Activated T-helper 2 cell treated with anti-CD3 and anti-CD28 coated beads, Interferon-gamma antibody, Interleukin-2, Interleukin-4, amounts not matched to agents 10 μg/mL and 5 μg/mL and 100 μg/mL, durations not matched to agents 14 hours and 24 hours and 36 hours (primary cell): ENCODE measurements at regions of chr19 and their contacts with region 1.

Region 1: DNA sequence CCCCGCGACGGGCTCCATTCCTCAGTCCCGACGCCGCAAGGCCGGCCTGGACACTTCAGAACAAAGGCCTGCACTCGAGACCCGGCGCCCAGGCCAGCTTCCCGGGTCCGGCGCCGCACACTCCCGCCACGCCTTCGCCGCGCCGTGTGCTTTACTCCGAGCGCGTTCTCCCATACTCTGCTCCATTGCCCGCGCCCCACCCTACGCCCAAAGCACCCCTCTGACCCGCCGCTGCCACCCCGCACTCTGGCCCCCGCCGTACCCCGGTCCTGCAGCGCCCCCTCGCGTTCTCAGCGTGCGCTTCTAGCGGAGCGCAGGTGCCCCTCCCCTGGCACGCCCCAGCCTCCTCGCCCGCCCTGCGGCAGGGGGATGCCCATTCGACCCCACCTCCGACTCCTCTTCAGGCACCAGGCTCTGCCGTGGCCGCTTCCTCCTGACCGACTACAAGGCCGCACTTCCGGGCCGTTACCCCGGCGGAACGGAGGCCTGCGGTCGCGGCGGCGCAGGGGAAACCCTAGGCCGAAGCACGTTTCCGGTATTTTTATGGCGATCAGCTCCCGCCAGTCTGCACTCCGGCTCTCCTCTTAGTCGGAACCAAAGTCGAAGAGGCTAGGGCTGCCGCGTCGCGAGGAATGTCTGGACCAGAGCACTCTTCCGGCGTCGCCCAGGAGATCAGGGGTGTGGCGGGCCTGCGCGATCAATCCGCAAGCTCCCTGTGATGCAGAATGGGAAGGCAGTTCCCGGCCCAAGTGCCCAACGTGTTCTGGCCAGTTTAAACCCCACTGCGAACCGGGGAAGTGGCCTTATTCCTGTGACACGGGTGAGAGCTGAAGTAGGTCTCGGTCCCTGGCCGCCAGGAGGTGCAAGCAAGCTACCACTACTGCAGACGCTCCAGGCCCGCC is at the start of gene ZBTB45:
- DNase-seq: peak; percentile 90
- H3K4me3 Mint-ChIP-seq: peak within 1 kb of the TSS; percentile 99
- H3K27ac Mint-ChIP-seq: peak within 1 kb of the TSS; percentile 98
- H3K4me1 Mint-ChIP-seq: peaks cover 29% of the 10 kb centered on the region
- H3K27me3 Mint-ChIP-seq: no peaks in the 10 kb centered on the region
- total RNA-seq, gene ZBTB45: 16.6 and 17.7 TPM in 2 replicates

Region 2: DNA sequence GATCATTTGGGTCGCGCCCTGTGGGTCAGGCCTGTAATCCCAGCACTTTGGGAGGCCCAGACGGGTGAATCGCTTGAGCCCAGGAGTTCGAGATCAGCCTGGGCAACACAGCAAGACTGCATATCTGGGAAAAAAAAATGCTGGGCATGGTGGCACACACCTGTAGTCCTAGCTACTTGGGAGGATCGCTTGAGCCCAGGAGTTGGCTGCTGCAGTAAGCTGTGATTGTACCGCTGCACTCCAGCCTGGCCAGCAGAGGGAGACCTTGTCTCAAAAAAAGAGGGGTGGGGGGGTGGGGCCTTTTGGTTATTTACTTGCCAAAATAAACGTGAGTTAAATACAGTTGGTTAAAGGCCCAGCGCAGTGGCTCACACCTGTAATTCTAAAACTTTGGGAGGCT is 300.7 kb before region 1 on chr19:
- intact Hi-C with region 1: loop called (anchors 1 kb)
- DNase-seq: peak; percentile 15
- H3K4me3 Mint-ChIP-seq: no peak overlapping the region
- H3K27ac Mint-ChIP-seq: no peak overlapping the region
- H3K4me1 Mint-ChIP-seq: no peaks in the 10 kb centered on the region
- H3K27me3 Mint-ChIP-seq: no peaks in the 10 kb centered on the region

Region 3: GRCh38 chr19:58243351-58243750 is 276.3 kb before region 1 on chr19:
- intact Hi-C with region 1: no loop called
- DNase-seq: no peak
- H3K4me3 Mint-ChIP-seq: no peak overlapping the region
- H3K27ac Mint-ChIP-seq: no peak overlapping the region
- H3K4me1 Mint-ChIP-seq: no peaks in the 10 kb centered on the region
- H3K27me3 Mint-ChIP-seq: no peaks in the 10 kb centered on the region

Region 4: DNA sequence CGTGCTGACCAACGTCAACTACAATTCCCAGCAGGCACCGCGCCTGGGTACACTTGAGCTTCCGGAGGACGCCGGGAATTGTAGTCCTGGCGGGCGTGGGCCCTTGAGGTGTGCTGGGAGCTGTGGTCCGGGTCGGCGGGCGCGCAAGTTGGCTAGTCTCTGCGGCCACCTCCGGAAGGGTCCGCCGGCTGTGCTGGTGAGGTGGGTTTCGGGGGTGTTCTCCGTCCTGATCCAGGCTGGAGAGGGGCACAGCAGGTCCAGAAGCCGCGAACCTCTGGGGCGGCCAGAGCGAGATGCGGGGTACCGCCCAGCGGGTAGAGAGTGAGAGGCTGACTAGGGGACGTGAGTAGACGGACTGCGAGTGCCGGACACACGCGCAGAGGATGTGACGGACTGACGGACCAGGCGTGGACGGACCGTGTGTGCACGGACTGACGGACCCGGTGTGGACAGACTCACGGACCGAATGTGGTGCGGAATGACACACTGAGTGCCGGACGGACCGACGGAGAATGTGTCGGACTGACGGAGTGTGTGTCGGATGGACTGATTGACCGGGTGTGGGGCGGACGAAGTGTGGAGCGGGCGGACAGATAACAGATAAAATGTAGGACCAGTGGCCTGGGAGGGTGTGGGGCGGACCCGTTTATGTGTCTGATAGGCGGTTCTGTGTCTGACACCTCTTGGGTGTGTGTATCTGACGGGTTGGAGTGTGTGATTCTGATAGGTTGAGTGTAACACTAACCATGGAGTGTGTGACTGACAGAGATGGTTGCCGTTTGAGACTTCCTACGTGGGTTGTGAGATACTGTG is 192.5 kb before region 1 on chr19 and contains the start of gene ZSCAN22:
- intact Hi-C with region 1: no loop called
- DNase-seq: peak; percentile 86
- H3K4me3 Mint-ChIP-seq: no peak within 1 kb of the TSS
- H3K27ac Mint-ChIP-seq: no peak within 1 kb of the TSS
- H3K4me1 Mint-ChIP-seq: peaks cover 2% of the 10 kb centered on the region
- H3K27me3 Mint-ChIP-seq: no peaks in the 10 kb centered on the region
- total RNA-seq, gene ZSCAN22: 4.6 and 4.9 TPM in 2 replicates

Region 5: GRCh38 chr19:58429745-58430144 is 89.9 kb before region 1 on chr19:
- intact Hi-C with region 1: no loop called
- DNase-seq: no peak
- H3K4me3 Mint-ChIP-seq: no peak overlapping the region
- H3K27ac Mint-ChIP-seq: no peak overlapping the region
- H3K4me1 Mint-ChIP-seq: no peaks in the 10 kb centered on the region
- H3K27me3 Mint-ChIP-seq: no peaks in the 10 kb centered on the region

Region 6: DNA sequence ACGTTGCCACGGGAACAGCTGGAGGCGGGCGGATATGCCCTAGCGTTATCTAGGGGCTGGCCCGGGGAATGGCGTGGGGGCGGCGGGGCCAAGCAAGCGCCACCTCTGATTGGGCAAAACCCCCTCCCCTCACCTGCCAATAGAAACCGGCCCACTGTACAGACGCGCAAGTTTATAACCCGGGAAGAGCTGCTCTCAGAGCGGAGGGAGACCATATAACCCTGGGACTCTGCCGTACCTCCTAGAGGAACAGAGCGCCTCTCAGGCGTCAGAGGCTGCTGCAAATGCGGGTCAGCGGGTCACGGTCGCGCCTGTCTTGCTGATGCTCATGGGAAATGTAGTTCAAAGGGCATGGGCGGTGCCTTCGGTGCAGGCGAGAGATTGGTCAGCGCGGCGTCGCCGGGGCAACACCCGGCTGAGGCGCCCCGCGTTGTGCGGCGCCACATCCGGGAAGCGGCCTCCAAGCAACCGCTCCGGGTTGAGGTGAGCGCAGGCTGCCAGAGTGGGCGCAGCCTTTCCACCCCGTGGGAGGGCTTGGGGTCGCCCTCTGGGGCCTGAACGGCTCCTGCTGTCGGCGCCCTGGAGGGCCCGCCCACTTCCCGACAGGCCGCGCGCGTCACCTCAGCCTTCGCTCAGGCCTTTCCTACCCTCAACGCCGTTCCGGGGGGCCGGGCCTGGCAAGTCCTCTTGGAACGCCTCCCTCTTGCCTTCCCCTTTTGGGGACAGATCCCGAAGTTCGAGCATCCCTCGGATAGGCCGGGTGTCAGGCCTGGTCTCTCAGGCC is 43.7 kb before region 1 on chr19 and contains the start of gene ZNF446:
- intact Hi-C with region 1: loop called (anchors 1 kb)
- DNase-seq: peak; percentile 97
- H3K4me3 Mint-ChIP-seq: peak within 1 kb of the TSS; percentile 88
- H3K27ac Mint-ChIP-seq: peak within 1 kb of the TSS; percentile 99
- H3K4me1 Mint-ChIP-seq: peaks cover 18% of the 10 kb centered on the region
- H3K27me3 Mint-ChIP-seq: no peaks in the 10 kb centered on the region
- total RNA-seq, gene ZNF446: 6.6 and 6.9 TPM in 2 replicates

Region 7: GRCh38 chr19:58543826-58544590 is 24.4 kb after region 1 on chr19 and contains the start of gene TRIM28:
- intact Hi-C with region 1: loop called (anchors 1 kb)
- DNase-seq: peak; percentile 100
- H3K4me3 Mint-ChIP-seq: peak within 1 kb of the TSS; percentile 91
- H3K27ac Mint-ChIP-seq: peak within 1 kb of the TSS; percentile 94
- H3K4me1 Mint-ChIP-seq: peaks cover 22% of the 10 kb centered on the region
- H3K27me3 Mint-ChIP-seq: peaks cover 20% of the 10 kb centered on the region
- total RNA-seq, gene TRIM28: 658 and 662 TPM in 2 replicates

Region 8: DNA sequence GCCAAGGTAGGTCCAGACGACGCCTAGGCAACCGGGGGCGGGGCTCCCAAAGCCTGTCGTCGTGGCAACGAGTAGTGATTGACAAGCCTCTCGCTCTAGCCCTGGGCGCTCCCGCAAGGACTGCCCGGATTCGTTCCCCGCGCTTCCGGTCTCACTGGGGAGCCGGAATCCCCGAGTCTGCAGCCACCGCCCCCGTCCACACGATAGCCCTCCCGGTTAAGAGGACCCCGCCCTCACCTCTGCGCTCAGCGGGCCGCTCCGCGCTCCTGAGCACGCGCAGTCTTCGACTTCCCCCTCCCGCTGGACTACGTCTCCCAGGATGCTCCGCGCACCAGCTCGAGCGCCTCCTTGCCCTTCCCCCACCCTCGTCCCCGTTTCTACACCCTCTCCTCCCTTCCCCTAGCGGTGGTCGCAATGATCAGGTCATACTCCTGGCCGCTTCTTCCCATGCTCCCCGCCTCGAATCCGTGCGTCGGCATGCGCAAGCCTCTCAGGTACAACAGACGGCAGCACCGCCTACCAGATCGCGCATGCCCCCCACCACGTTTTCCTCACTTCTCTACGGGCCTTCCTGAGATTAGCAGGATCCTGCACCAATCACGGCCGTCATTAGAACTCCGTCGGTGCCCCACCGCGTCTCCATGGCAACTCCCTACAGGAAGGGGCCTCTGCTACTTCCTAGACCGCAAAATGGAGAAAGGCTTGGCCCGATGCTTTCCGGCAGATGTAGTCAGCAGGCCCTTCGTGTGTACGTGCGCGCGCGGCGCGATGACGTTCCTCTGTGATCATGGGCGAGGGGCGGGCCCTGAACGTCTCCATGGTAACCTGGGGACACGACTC is 53.4 kb after region 1 on chr19 and contains the start of gene MZF1:
- intact Hi-C with region 1: loop called (anchors 1 kb)
- DNase-seq: peak; percentile 100
- H3K4me3 Mint-ChIP-seq: peak within 1 kb of the TSS; percentile 95
- H3K27ac Mint-ChIP-seq: peak within 1 kb of the TSS; percentile 100
- H3K4me1 Mint-ChIP-seq: peaks cover 21% of the 10 kb centered on the region
- H3K27me3 Mint-ChIP-seq: no peaks in the 10 kb centered on the region
- total RNA-seq, gene MZF1: 18.8 and 19.0 TPM in 2 replicates